GM12878 (cell line): ENCODE measurements at regions of chr11 and their contacts with region 1.

Region 1: DNA sequence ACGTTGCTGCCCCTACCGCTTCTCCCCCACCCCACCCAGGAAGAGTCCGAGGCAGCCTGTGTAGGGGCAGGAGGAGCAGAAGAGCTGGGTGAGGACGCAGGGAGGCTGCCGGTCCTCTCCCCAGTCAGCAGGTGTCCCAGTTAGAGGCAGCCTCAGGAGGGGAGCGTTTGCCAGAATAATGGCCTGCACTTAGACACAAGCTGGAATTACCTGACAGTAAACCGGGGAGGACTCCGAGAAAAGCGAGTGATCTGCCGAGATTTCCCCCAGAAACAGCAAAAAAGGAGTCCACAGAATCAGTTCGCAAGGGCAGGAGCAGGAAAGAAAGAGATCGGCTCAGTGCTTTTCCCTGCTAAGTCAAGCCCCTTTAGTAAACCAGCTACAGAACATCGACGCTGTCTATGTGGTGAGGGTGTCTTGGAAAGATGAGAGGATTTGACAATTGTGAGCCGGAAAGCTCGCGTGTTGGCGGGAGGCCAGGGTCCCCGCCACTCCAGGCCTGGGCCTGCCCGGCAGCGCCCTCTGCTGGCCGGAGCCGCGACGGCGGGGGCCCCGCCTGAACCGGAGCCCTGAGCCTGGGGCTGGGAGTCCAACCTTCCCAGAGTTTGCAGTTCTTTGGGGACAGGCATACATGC is 17.7 kb upstream of the THRSP start:
- DNase-seq: no peak
- ATAC-seq: peak; percentile 99
- H3K4me3 ChIP-seq: peak overlapping the region; percentile 61; the same call in 1 of the 2 replicates
- H3K27ac ChIP-seq: no peak overlapping the region
- H3K4me1 ChIP-seq: no peaks in the 10 kb centered on the region
- H3K27me3 ChIP-seq: no peaks in the 10 kb centered on the region
- CTCF ChIP-seq: peak; percentile 96 to 99 (median 98)
- EP300 ChIP-seq: no peak
- POLR2A ChIP-seq: no peak
- RAD21 ChIP-seq: peak; percentile 83

Region 2: DNA sequence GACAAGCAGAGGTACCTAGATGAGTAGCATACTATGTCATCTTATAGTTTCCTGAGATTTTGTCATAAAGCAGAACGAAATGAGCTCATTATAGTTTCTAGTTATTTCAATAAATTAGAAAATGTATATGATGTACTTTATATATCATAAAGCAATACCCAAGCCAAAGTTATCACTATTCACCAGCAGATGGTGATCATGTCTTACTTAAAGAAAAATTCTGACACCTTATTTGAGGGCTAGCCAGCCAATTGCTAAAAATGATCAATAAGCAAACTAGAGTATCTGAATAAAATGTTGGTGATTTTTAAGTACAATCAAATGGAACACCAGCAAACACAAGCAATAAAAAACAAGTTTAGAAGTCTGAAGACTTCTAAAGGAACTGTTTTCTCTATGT is 269.5 kb before region 1 on chr11:
- CTCF ChIA-PET with region 1: interaction called, 6 read pairs
- POLR2A ChIA-PET with region 1: no interaction called
- RAD21 ChIA-PET with region 1: interaction called, 6 read pairs
- SMC1A ChIA-PET with region 1: interaction called, 3 read pairs
- in situ Hi-C with region 1: no loop called
- intact Hi-C with region 1: loop called (anchors 2 kb)
- DNase-seq: no peak
- ATAC-seq: peak; percentile 62
- H3K4me3 ChIP-seq: no peak overlapping the region
- H3K27ac ChIP-seq: no peak overlapping the region
- H3K4me1 ChIP-seq: no peaks in the 10 kb centered on the region
- H3K27me3 ChIP-seq: no peaks in the 10 kb centered on the region
- CTCF ChIP-seq: peak; percentile 3 to 46 (median 18); a peak in 4 of 6 replicates
- EP300 ChIP-seq: no peak
- POLR2A ChIP-seq: no peak
- RAD21 ChIP-seq: peak; percentile 50

Region 3: GRCh38 chr11:78000193-78000592 is 45.8 kb before region 1 on chr11:
- CTCF ChIA-PET with region 1: interaction called, 37 read pairs
- POLR2A ChIA-PET with region 1: no interaction called
- RAD21 ChIA-PET with region 1: interaction called, 15 read pairs
- SMC1A ChIA-PET with region 1: interaction called, 8 read pairs
- in situ Hi-C with region 1: no loop called
- intact Hi-C with region 1: loop called (anchors 1 kb)
- DNase-seq: no peak
- ATAC-seq: peak; percentile 96
- H3K4me3 ChIP-seq: no peak overlapping the region
- H3K27ac ChIP-seq: no peak overlapping the region
- H3K4me1 ChIP-seq: no peaks in the 10 kb centered on the region
- H3K27me3 ChIP-seq: no peaks in the 10 kb centered on the region
- CTCF ChIP-seq: peak; percentile 64 to 71 (median 67)
- EP300 ChIP-seq: no peak
- POLR2A ChIP-seq: no peak
- RAD21 ChIP-seq: peak; percentile 51

Region 4: GRCh38 chr11:78022397-78023396 is 23.3 kb before region 1 on chr11 and contains the start of gene KCTD14:
- CTCF ChIA-PET with region 1: interaction called, 10 read pairs
- POLR2A ChIA-PET with region 1: interaction called, 5 read pairs
- RAD21 ChIA-PET with region 1: no interaction called
- SMC1A ChIA-PET with region 1: interaction called, 3 read pairs
- in situ Hi-C with region 1: no loop called
- intact Hi-C with region 1: no loop called
- DNase-seq: no peak
- ATAC-seq: peak; percentile 93
- H3K4me3 ChIP-seq: no peak within 1 kb of the TSS
- H3K27ac ChIP-seq: peak within 1 kb of the TSS; percentile 25
- H3K4me1 ChIP-seq: no peaks in the 10 kb centered on the region
- H3K27me3 ChIP-seq: no peaks in the 10 kb centered on the region
- CTCF ChIP-seq: no peak
- EP300 ChIP-seq: no peak
- POLR2A ChIP-seq: no peak
- RAD21 ChIP-seq: no peak
- polyA plus RNA-seq, gene KCTD14: 0.11 to 0.42 TPM

Region 5: GRCh38 chr11:78030429-78031325 is 15.3 kb before region 1 on chr11:
- CTCF ChIA-PET with region 1: interaction called, 17 read pairs
- POLR2A ChIA-PET with region 1: interaction called, 5 read pairs
- RAD21 ChIA-PET with region 1: interaction called, 4 read pairs
- SMC1A ChIA-PET with region 1: interaction called, 19 read pairs
- in situ Hi-C with region 1: no loop called
- intact Hi-C with region 1: no loop called
- DNase-seq: no peak
- ATAC-seq: no peak
- H3K4me3 ChIP-seq: no peak overlapping the region
- H3K27ac ChIP-seq: no peak overlapping the region
- H3K4me1 ChIP-seq: peaks cover 6% of the 10 kb centered on the region
- H3K27me3 ChIP-seq: no peaks in the 10 kb centered on the region
- CTCF ChIP-seq: no peak
- EP300 ChIP-seq: no peak
- POLR2A ChIP-seq: no peak
- RAD21 ChIP-seq: no peak